A549 (cell line): ENCODE measurements at regions of chr20 and their contacts with region 1.

Region 1: GRCh38 chr20:35207950-35208611 is 18.4 kb upstream of the MMP24 start:
- DNase-seq: peak; percentile 53 to 91
- ATAC-seq: peak; percentile 95 to 96
- H3K4me3 ChIP-seq: no peak overlapping the region
- H3K27ac ChIP-seq: peak overlapping the region; percentile 75 to 91
- H3K4me1 ChIP-seq: peaks cover 29% of the 10 kb centered on the region
- CTCF ChIP-seq: peak; percentile 91
- EP300 ChIP-seq: no peak; a peak in 1 of 5 replicates
- POLR2A ChIP-seq: no peak
- RAD21 ChIP-seq: peak; percentile 93 to 98

Region 2: DNA sequence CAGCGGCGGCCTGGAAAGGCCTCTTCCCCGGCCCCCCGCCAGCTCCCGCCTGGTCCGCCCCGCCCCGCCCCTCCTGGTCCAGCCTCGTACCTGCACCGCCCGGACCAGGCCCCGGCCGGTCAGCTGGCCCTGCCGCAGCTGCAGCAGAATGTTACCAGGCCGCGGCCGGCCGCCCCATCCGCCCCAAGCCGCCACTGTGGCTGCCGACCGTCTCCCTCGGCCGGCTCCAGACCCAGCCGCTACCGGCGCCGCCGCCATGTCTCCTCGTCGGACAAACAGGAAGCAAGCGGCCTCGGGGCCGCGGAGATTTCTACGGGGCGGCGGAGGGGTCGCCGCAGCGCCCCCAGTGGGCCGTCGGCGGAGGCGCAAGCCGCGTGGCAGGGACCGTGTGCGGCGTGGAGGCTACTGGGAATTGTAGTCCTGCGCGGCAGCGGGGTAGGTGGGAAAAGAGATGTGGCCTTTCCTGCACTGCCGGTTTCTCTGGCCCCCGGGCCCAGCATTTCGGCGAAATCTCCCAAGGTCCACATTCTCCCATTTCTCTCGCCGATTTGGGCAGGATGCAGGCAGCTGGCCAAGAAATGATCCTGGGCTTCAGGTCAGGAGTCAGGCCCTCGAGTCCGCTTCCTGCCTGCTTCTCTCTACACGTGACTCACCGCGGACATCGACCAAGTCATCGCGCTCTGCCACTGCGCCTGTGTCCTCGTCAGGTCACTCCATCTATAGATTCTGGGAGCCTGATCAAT is 115.4 kb before region 1 on chr20 and contains the start of gene TRPC4AP:
- CTCF ChIA-PET with region 1: interaction called, 59 read pairs
- POLR2A ChIA-PET with region 1: interaction called, 3 read pairs
- DNase-seq: peak; percentile 69 to 91
- ATAC-seq: peak; percentile 94 to 95
- H3K4me3 ChIP-seq: peak within 1 kb of the TSS; percentile 61
- H3K27ac ChIP-seq: peak within 1 kb of the TSS; percentile 93 to 94
- H3K4me1 ChIP-seq: peaks cover 27% of the 10 kb centered on the region
- CTCF ChIP-seq: peak; percentile 89
- EP300 ChIP-seq: no peak
- POLR2A ChIP-seq: peak; percentile 61
- RAD21 ChIP-seq: peak; percentile 47 to 52
- polyA plus RNA-seq, gene TRPC4AP: 55.3 and 64.6 TPM in 2 replicates

Region 3: GRCh38 chr20:35146920-35147574 is 61.0 kb before region 1 on chr20 and contains the start of gene EDEM2:
- CTCF ChIA-PET with region 1: interaction called, 111 read pairs
- POLR2A ChIA-PET with region 1: interaction called, 3 read pairs
- DNase-seq: peak; percentile 95 to 97
- ATAC-seq: peak; percentile 95 to 96
- H3K4me3 ChIP-seq: peak within 1 kb of the TSS; percentile 78
- H3K27ac ChIP-seq: peak within 1 kb of the TSS; percentile 89
- H3K4me1 ChIP-seq: peaks cover 17% of the 10 kb centered on the region
- CTCF ChIP-seq: peak; percentile 7; the same call in 1 of the 3 replicates
- EP300 ChIP-seq: no peak
- POLR2A ChIP-seq: peak; percentile 81
- RAD21 ChIP-seq: peak in 1 of 2 experiments; percentile 35; a peak in 2 of 5 replicates
- polyA plus RNA-seq, gene EDEM2: 41.2 and 41.6 TPM in 2 replicates

Region 4: GRCh38 chr20:35192111-35192872 is 15.8 kb before region 1 on chr20:
- CTCF ChIA-PET with region 1: interaction called, 43 read pairs
- POLR2A ChIA-PET with region 1: no interaction called
- DNase-seq: no peak
- ATAC-seq: no peak
- H3K4me3 ChIP-seq: no peak overlapping the region
- H3K27ac ChIP-seq: no peak overlapping the region
- H3K4me1 ChIP-seq: no peaks in the 10 kb centered on the region
- CTCF ChIP-seq: no peak
- EP300 ChIP-seq: no peak
- POLR2A ChIP-seq: no peak
- RAD21 ChIP-seq: no peak

Region 5: GRCh38 chr20:35243317-35243716 is 35.2 kb after region 1 on chr20:
- CTCF ChIA-PET with region 1: interaction called, 13 read pairs
- POLR2A ChIA-PET with region 1: no interaction called
- DNase-seq: no peak
- ATAC-seq: no peak
- H3K4me3 ChIP-seq: no peak overlapping the region
- H3K27ac ChIP-seq: 0 out of 6 replicates have a peak overlapping the region, but pooled peaks of 1 of the 2 experiments have one; percentile 38
- H3K4me1 ChIP-seq: peaks cover 23% of the 10 kb centered on the region
- CTCF ChIP-seq: no peak
- EP300 ChIP-seq: no peak
- POLR2A ChIP-seq: no peak
- RAD21 ChIP-seq: no peak